ENCODE measurements at regions of chr20 and their contacts with region 1.

Region 1: DNA sequence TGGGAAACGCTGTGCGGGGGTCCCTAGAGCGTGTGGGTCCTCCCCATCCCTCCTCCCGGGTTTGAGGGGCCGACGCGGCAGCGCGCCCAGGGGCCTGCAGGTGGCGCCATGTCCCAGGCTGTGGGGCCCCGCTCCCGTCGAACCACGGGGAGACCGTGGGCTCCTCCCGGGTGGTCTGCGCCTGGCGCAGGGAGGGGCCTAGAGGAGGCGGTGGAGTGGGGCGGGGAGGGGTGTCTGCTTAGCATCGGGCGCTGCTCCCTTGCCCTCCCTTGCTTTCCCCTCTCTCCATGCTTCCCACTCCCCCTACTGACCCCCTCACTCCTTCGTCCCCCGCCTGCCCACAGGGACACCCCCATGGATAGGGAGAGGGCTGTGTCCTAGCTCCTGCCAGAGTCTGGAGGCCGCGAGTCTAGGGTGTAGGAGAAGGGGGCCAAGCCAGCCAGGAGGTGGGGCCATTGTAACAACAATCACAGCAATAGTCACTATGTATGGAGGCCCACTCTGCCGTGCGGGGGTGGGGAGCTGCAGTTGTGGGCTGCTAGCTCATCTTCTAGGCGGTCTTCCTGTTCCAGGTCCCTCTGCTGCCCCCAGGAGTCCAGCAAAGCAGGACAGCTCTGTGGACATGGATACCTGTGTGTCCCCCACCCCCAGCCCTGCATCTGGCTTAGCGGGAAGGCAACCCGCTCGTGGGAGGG is 51.7 kb downstream of the CHMP4B start:
- DNase-seq: peak; percentile 52 to 91
- H3K4me3 ChIP-seq: peak overlapping the region in 2 of 4 donors; percentile 4 to 6
- H3K27ac ChIP-seq: no peak overlapping the region
- H3K4me1 ChIP-seq: peaks cover 7 to 28% (median 16%) of the 10 kb centered on the region in 4 donors
- H3K27me3 ChIP-seq: no peaks in the 10 kb centered on the region
- CTCF ChIP-seq: peak in 5 of 7 experiments; percentile 15 to 73 (median 54)
- EP300 ChIP-seq: no peak
- POLR2A ChIP-seq: no peak

Region 2: GRCh38 chr20:34129518-34130162 is 266.8 kb after region 1 on chr20:
- intact Hi-C with region 1: loop called (anchors 10 kb)
- DNase-seq: peak; percentile 64 to 90
- H3K4me3 ChIP-seq: peak overlapping the region in 3 of 4 donors; percentile 11 to 25 (median 17)
- H3K27ac ChIP-seq: no peak overlapping the region
- H3K4me1 ChIP-seq: peaks cover 0 to 13% (median 7%) of the 10 kb centered on the region in 4 donors
- H3K27me3 ChIP-seq: no peaks in the 10 kb centered on the region
- CTCF ChIP-seq: peak in 5 of 7 experiments; percentile 71 to 88 (median 82)
- EP300 ChIP-seq: no peak
- POLR2A ChIP-seq: no peak